ENCODE measurements at regions of chr1 and their contacts with region 1.

Region 1: GRCh38 chr1:193841857-193842256 is 655.4 kb upstream of the B3GALT2 start:
- DNase-seq: no peak
- ATAC-seq: no peak
- H3K4me3 ChIP-seq: no peak overlapping the region
- H3K4me3 Mint-ChIP-seq: no peak overlapping the region
- H3K27ac ChIP-seq: no peak overlapping the region
- H3K27ac Mint-ChIP-seq: no peak overlapping the region
- H3K4me1 ChIP-seq: no peaks in the 10 kb centered on the region
- H3K4me1 Mint-ChIP-seq: no peaks in the 10 kb centered on the region
- H3K27me3 ChIP-seq: no peaks in the 10 kb centered on the region
- H3K27me3 Mint-ChIP-seq: no peaks in the 10 kb centered on the region
- CTCF ChIP-seq: no peak

Region 2: DNA sequence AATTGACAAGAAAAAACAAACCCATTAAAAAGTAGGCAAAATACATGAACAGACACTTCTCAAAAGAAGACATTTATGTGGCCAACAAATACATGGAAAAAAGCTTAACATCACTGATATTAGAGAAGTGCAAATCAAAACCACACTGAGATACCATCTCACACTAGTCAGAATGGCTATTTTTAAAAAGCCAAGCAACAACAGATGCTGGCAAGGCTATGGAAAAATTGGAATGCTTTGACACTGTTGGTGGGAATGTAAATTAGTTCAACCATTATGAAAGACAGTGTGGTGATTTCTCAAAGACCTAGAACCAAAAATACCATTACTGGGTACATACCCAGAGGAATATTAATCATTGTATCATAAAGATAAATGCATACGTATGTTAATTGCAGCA is 14.3 kb before region 1 on chr1:
- CTCF ChIA-PET with region 1: no interaction called
- POLR2A ChIA-PET with region 1: no interaction called
- intact Hi-C with region 1: loop called in 1 of 2 experiments (anchors 2 kb)
- DNase-seq: no peak
- ATAC-seq: no peak
- H3K4me3 ChIP-seq: no peak overlapping the region
- H3K4me3 Mint-ChIP-seq: no peak overlapping the region
- H3K27ac ChIP-seq: no peak overlapping the region
- H3K27ac Mint-ChIP-seq: no peak overlapping the region
- H3K4me1 ChIP-seq: no peaks in the 10 kb centered on the region
- H3K4me1 Mint-ChIP-seq: no peaks in the 10 kb centered on the region
- H3K27me3 ChIP-seq: no peaks in the 10 kb centered on the region
- H3K27me3 Mint-ChIP-seq: no peaks in the 10 kb centered on the region
- CTCF ChIP-seq: no peak

Region 3: GRCh38 chr1:193884848-193885558 is 43.1 kb after region 1 on chr1:
- CTCF ChIA-PET with region 1: no interaction called
- POLR2A ChIA-PET with region 1: no interaction called
- intact Hi-C with region 1: no loop called
- DNase-seq: no peak
- ATAC-seq: no peak
- H3K4me3 ChIP-seq: no peak overlapping the region
- H3K4me3 Mint-ChIP-seq: no peak overlapping the region
- H3K27ac ChIP-seq: no peak overlapping the region
- H3K27ac Mint-ChIP-seq: no peak overlapping the region
- H3K4me1 ChIP-seq: no peaks in the 10 kb centered on the region
- H3K4me1 Mint-ChIP-seq: no peaks in the 10 kb centered on the region
- H3K27me3 ChIP-seq: no peaks in the 10 kb centered on the region
- H3K27me3 Mint-ChIP-seq: no peaks in the 10 kb centered on the region
- CTCF ChIP-seq: no peak

Region 4: DNA sequence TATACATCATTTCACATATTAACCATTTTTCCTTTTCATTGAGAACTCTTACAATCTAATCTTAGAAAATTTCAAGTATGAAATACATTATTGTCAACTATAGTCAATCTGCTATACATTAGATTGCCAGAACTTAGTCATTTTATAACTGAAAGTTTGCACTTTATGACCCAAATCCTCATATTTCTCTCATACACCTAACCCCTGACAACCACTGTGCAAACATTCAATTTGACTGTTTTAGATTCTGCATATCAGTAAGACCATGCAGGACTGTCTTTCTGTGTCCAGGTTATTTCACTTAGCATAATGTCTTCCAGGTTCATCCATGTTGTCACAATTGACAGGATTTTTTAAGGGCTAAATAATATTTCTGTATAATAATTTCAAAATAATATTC is 643.6 kb after region 1 on chr1:
- CTCF ChIA-PET with region 1: no interaction called
- POLR2A ChIA-PET with region 1: no interaction called
- intact Hi-C with region 1: no loop called
- DNase-seq: no peak
- ATAC-seq: no peak
- H3K4me3 ChIP-seq: no peak overlapping the region
- H3K4me3 Mint-ChIP-seq: no peak overlapping the region
- H3K27ac ChIP-seq: no peak overlapping the region
- H3K27ac Mint-ChIP-seq: no peak overlapping the region
- H3K4me1 ChIP-seq: no peaks in the 10 kb centered on the region
- H3K4me1 Mint-ChIP-seq: no peaks in the 10 kb centered on the region
- H3K27me3 ChIP-seq: no peaks in the 10 kb centered on the region
- H3K27me3 Mint-ChIP-seq: no peaks in the 10 kb centered on the region
- CTCF ChIP-seq: no peak

Measured in CD8-positive, alpha-beta T cell (primary cell).